CD14-positive monocyte (primary cell): ENCODE measurements at regions of chr9 and their contacts with region 1.

Region 1: DNA sequence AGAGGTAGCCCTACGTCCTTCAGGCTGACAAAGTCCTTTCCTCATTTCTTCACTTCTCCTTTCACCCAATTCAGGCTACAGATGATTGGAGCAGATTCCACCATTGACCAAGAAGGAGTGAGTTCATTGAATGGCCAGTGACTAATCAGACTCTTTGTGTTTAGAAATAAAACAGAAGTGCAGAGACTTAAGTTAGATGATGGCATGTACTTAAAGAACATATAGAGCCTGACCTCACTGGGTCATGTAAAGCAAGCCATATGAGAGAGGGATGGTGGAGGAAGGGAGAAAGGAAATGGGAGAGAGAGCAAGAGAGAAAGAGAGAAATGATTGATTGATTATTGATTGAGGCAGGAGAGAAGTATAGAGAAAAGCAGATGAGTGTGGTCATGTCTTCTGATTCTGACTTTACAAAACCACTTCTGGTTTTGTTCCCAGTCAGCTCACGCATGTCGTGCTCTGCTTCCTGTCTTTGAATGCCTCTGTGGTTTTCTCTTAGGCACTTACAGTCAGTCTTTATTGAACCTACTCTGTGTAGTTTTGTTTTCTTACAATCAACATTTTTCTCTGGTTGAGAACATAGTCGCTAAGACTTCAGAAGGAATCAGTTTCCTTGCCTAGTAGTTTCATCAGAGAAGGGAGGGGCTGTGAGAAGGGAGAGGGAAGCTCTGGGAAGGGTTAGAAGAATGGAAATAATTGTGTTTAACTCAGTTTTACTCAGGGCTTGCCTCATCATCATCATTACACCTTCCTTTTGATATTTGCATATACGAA is 149.2 kb upstream of the KLF9 start:
- DNase-seq: peak; percentile 93 to 97 (median 97)
- H3K4me3 ChIP-seq: peak overlapping the region in 1 of 3 experiments; percentile 34
- H3K4me3 Mint-ChIP-seq: peak overlapping the region; percentile 70 to 91
- H3K27ac ChIP-seq: peak overlapping the region; percentile 90 to 98
- H3K27ac Mint-ChIP-seq: peak overlapping the region; percentile 97 to 100 (median 100)
- H3K4me1 ChIP-seq: peaks cover 35 to 36% of the 10 kb centered on the region in 2 donors
- H3K4me1 Mint-ChIP-seq: peaks cover 32% of the 10 kb centered on the region
- H3K27me3 ChIP-seq: no peaks in the 10 kb centered on the region
- H3K27me3 Mint-ChIP-seq: peaks cover 0 to 3% (median 0%) of the 10 kb centered on the region in 3 donors
- CTCF ChIP-seq: no peak

Region 2: DNA sequence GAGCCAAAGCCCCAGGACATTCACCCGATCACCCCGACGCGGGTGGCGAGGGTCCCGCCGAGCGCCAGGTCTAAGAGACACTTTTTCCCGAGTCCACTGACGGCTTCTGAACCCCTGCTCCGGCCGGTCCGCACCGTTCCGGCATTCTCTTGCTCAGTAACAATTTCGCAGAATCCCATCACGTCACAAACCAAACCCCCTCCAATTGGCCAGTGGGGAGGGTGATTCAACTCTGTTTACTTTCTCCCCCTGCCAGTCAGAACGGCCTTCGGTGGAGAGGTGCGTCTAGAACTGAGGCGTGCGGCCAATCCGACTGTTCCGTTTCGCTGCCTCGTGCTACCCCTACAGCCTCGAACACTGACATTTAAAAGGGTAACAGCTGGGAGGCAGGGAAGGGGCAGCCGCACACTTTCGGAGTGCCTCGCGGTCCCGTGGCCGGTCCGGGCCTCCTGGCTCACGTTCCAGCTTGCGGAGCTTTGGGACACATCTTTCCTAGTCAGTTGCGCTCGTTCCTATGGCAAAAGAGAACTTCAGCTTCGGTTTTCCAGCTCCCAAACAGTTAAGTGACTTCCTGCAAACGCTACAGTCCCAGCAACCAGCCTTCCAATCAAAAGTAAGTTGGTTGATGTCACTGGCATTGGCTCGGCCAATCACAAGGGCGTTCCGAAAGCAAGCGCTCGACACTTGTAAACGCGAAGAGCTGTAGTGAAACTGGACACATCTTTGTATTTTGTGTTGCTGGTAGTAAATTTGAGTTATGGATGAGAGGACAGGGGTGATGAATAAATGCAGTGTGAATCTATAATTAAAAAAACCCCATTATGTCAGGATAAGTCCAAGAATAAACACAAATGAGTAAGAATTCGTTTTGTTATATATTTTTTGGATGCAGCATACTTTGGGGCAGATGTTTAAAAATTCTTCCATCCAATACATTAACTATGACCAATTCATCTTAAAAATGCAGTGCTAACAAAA is 149.5 kb before region 1 on chr9 and contains the start of gene KLF9:
- intact Hi-C with region 1: no loop called
- DNase-seq: peak; percentile 93 to 95 (median 94)
- H3K4me3 ChIP-seq: peak within 1 kb of the TSS; percentile 39 to 89 (median 89)
- H3K4me3 Mint-ChIP-seq: peak within 1 kb of the TSS; percentile 92 to 99
- H3K27ac ChIP-seq: peak within 1 kb of the TSS; percentile 92 to 99
- H3K27ac Mint-ChIP-seq: peak within 1 kb of the TSS; percentile 98 to 100 (median 99)
- H3K4me1 ChIP-seq: peaks cover 59 to 65% of the 10 kb centered on the region in 2 donors
- H3K4me1 Mint-ChIP-seq: peaks cover 41% of the 10 kb centered on the region
- H3K27me3 ChIP-seq: no peaks in the 10 kb centered on the region
- H3K27me3 Mint-ChIP-seq: peaks cover 0 to 4% (median 2%) of the 10 kb centered on the region in 3 donors
- CTCF ChIP-seq: no peak
- polyA plus RNA-seq, gene KLF9: 0.18 to 26.1 (median 0.72) TPM

Region 3: DNA sequence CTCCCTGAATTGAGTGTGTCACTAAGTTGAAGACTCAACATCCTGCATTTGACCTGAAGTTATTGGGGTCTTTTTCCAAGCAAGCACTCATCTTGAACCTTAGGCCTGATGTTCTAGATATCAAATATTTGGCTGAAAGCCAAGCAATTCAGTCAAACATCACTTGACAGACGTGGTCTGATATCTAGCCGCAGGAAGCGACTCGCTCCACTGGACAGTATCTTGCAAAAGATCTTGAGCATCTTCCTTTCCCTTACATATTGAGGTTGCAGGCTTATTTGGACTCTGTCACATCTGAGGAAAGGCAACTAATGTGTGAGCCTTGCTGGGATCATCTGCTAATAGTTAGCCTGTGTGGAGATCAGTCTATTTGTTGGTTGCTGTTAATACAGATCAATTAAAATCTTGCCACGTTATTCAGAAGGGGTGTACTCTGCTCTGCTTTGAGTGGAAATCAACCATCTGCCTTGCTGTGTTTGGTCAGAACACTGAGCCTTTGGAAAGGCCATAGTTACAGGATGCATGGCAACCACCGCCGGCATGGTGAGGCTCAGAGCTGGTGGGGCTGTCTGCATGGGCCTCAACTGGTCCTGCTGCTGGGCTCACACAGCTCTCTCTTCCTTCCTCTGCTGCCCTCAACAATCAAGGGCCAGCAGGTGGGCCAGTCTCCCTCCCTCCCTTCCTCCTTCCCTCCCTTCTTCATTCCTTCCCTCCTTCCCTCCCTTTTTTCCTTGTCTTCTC is 17.8 kb after region 1 on chr9:
- intact Hi-C with region 1: loop called in 1 of 2 experiments (anchors 2 kb)
- DNase-seq: peak in 1 of 3 donors; percentile 21
- H3K4me3 ChIP-seq: no peak overlapping the region
- H3K4me3 Mint-ChIP-seq: no peak overlapping the region
- H3K27ac ChIP-seq: peak overlapping the region in 1 of 2 donors; percentile 59
- H3K27ac Mint-ChIP-seq: peak overlapping the region; percentile 60 to 91 (median 83)
- H3K4me1 ChIP-seq: peaks cover 28 to 31% of the 10 kb centered on the region in 2 donors
- H3K4me1 Mint-ChIP-seq: peaks cover 37% of the 10 kb centered on the region
- H3K27me3 ChIP-seq: no peaks in the 10 kb centered on the region
- H3K27me3 Mint-ChIP-seq: peaks cover 0 to 2% (median 0%) of the 10 kb centered on the region in 3 donors
- CTCF ChIP-seq: no peak

Region 4: GRCh38 chr9:70594386-70594944 is 30.8 kb after region 1 on chr9:
- intact Hi-C with region 1: no loop called
- DNase-seq: no peak
- H3K4me3 ChIP-seq: no peak overlapping the region
- H3K4me3 Mint-ChIP-seq: no peak overlapping the region
- H3K27ac ChIP-seq: no peak overlapping the region
- H3K27ac Mint-ChIP-seq: no peak overlapping the region
- H3K4me1 ChIP-seq: no peaks in the 10 kb centered on the region
- H3K4me1 Mint-ChIP-seq: no peaks in the 10 kb centered on the region
- H3K27me3 ChIP-seq: no peaks in the 10 kb centered on the region
- H3K27me3 Mint-ChIP-seq: no peaks in the 10 kb centered on the region
- CTCF ChIP-seq: no peak

Region 5: GRCh38 chr9:70893580-70894122 is 330.0 kb after region 1 on chr9:
- intact Hi-C with region 1: no loop called
- DNase-seq: no peak
- H3K4me3 ChIP-seq: no peak overlapping the region
- H3K4me3 Mint-ChIP-seq: no peak overlapping the region
- H3K27ac ChIP-seq: no peak overlapping the region
- H3K27ac Mint-ChIP-seq: no peak overlapping the region
- H3K4me1 ChIP-seq: no peaks in the 10 kb centered on the region
- H3K4me1 Mint-ChIP-seq: no peaks in the 10 kb centered on the region
- H3K27me3 ChIP-seq: no peaks in the 10 kb centered on the region
- H3K27me3 Mint-ChIP-seq: no peaks in the 10 kb centered on the region
- CTCF ChIP-seq: no peak